ENCODE measurements at regions of chr1 and their contacts with region 1.

Region 1: DNA sequence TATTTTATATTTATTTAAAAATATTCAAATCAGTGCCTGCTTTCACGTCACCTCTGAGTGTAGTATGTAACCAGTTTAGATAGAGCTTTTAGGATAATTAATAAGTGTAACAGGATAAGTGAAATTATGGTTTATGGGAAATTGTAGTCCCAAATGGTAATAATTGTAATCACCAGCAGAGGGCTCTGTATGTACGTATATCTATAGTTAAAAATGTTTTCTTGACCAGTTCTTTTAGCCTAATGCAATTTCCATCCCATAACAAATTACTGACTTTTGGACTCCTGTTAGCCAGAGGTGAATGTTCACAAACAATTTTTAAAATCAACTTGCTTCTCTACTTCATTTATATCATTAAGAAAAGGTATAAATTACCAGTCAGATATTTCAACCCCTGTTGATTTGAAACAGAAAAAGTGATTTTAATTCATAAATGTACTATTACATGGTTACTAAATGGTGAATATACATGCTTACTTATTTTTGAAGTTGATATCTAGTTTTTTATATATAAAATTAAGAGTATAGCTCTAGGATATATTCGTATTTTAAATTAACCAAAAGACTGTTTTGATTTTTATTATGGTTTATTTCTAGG is 25.3 kb downstream of the SLC30A7 start:
- DNase-seq: peak in 2 of 5 donors; percentile 64 to 68
- H3K4me3 ChIP-seq: no peak overlapping the region
- H3K27ac ChIP-seq: no peak overlapping the region
- H3K4me1 ChIP-seq: no peaks in the 10 kb centered on the region
- H3K27me3 ChIP-seq: no peaks in the 10 kb centered on the region
- CTCF ChIP-seq: peak; percentile 36

Region 2: GRCh38 chr1:101288491-101288944 is 367.3 kb after region 1 on chr1:
- intact Hi-C with region 1: loop called (anchors 10 kb)
- DNase-seq: peak in 4 of 5 donors; percentile 60 to 89 (median 70)
- H3K4me3 ChIP-seq: peak overlapping the region in 1 of 3 donors; percentile 28
- H3K27ac ChIP-seq: no peak overlapping the region
- H3K4me1 ChIP-seq: no peaks in the 10 kb centered on the region
- H3K27me3 ChIP-seq: no peaks in the 10 kb centered on the region
- CTCF ChIP-seq: peak; percentile 79

Measured in kidney (tissue), 22 donors.